ENCODE measurements at regions of chr1 and their contacts with region 1.

Region 1: GRCh38 chr1:54094001-54094729 is 40.8 kb downstream of the TCEANC2 start:
- DNase-seq: no peak
- H3K4me3 ChIP-seq: no peak overlapping the region
- H3K27ac ChIP-seq: no peak overlapping the region
- H3K4me1 ChIP-seq: peaks cover 43% of the 10 kb centered on the region
- H3K27me3 ChIP-seq: no peaks in the 10 kb centered on the region
- CTCF ChIP-seq: no peak

Region 2: GRCh38 chr1:54081306-54082270 is 12.6 kb before region 1 on chr1:
- CTCF ChIA-PET with region 1: no interaction called
- POLR2A ChIA-PET with region 1: interaction called, 11 read pairs
- intact Hi-C with region 1: no loop called
- DNase-seq: peak; percentile 67
- H3K4me3 ChIP-seq: no peak overlapping the region
- H3K27ac ChIP-seq: no peak overlapping the region
- H3K4me1 ChIP-seq: no peaks in the 10 kb centered on the region
- H3K27me3 ChIP-seq: no peaks in the 10 kb centered on the region
- CTCF ChIP-seq: peak; percentile 74

Region 3: GRCh38 chr1:54335755-54336108 is 241.6 kb after region 1 on chr1:
- CTCF ChIA-PET with region 1: no interaction called
- POLR2A ChIA-PET with region 1: no interaction called
- intact Hi-C with region 1: no loop called
- DNase-seq: peak; percentile 29
- H3K4me3 ChIP-seq: no peak overlapping the region
- H3K27ac ChIP-seq: no peak overlapping the region
- H3K4me1 ChIP-seq: peaks cover 20% of the 10 kb centered on the region
- H3K27me3 ChIP-seq: no peaks in the 10 kb centered on the region
- CTCF ChIP-seq: no peak